Psoas muscle (tissue), 8 donors: ENCODE measurements at regions of chr14 and their contacts with region 1.

Region 1: DNA sequence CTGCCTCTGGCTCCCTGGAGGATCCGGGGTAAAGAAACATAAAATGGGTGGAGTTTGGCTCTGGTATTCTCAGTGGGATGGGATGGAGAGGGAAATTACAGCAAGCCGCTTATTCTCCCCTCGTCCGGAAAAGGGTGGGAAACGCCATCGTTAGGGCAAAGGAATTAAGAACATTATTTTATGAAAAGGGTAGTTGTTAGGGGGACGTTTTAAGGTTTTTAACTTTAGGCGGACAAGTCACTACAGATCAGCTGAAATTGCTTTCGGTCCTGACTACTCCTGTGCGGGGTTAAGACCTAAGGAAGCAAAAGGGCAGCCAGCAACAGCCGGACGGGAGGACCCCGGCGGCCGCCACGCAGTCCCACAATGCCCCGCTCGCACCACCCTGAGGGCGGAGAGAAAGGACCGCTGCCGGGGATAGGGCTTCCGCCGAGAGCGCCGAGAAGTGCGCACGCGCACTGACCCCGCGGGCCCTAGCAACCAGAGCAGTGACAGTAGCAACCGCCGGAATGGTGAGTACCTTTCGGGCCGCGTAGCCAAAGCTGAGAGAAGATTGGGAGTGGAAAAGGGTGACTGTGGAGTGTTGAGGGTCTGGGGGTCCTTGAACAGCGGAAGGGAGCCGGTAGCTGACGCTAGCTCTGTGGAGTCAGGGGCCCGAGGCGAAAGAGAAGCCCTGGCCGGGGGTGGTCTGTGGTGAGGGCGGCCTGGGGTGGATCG is at the start of gene DNAL1:
- DNase-seq: peak; percentile 94 to 97
- ATAC-seq: peak; percentile 99 to 100 (median 100)
- H3K4me3 ChIP-seq: peak within 1 kb of the TSS; percentile 80
- H3K27ac ChIP-seq: peak within 1 kb of the TSS; percentile 86
- H3K4me1 ChIP-seq: peaks cover 11% of the 10 kb centered on the region
- H3K27me3 ChIP-seq: no peaks in the 10 kb centered on the region
- CTCF ChIP-seq: no peak
- total RNA-seq, gene DNAL1: 4.3 to 8.4 (median 6.3) TPM

Region 2: DNA sequence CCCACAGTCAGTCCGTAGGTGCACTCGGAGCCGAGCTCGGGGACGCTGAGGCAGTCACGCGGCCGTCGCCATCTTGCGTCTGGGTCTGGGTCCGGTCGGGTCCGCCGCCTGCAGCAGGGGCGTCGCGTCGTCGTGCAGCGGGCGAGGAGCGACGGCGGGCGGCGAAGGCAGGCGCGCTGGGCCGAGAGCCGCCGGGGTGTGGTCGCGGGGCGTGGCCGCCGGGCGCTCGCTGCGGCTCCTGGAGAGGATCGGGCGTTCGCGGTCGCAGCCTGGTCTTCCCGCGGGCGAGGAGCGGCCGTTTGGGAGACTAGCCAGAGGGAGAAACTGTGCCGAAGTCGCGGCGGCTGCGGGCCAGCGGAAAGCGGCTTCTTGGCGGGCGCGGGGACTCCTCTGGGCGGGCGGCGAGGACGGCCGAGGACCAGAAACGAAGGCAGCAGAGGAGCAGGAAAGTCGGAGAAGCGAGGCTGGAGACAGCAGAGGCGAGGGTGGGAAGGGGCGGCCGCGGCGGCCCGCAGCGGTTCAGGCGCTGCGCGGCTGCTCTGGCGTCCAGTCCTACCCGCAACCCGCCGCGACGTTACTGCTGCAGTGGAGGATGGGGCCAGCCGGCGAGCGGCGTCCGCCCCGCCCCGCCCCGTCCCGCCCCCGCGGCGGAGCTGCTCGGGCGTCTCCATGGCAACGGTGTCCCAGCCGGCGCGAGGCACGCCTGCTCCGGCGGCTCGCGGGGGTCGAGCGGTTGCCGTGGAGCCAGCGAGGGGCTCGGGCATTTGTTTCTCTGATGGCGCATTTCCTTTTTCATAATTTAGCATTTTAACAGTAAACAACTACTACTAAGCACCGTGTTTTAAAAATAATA is 69.3 kb after region 1 on chr14 and contains the start of gene PNMA1:
- intact Hi-C with region 1: loop called in 1 of 2 experiments (anchors 5 kb)
- DNase-seq: peak; percentile 88 to 91
- ATAC-seq: peak; percentile 87 to 91 (median 89)
- H3K4me3 ChIP-seq: peak within 1 kb of the TSS; percentile 79
- H3K27ac ChIP-seq: peak within 1 kb of the TSS; percentile 85
- H3K4me1 ChIP-seq: peaks cover 22% of the 10 kb centered on the region
- H3K27me3 ChIP-seq: no peaks in the 10 kb centered on the region
- CTCF ChIP-seq: no peak
- total RNA-seq, gene PNMA1: 9.3 to 27.0 (median 17.0) TPM